ENCODE measurements at regions of chr7 and their contacts with region 1.

Region 1: DNA sequence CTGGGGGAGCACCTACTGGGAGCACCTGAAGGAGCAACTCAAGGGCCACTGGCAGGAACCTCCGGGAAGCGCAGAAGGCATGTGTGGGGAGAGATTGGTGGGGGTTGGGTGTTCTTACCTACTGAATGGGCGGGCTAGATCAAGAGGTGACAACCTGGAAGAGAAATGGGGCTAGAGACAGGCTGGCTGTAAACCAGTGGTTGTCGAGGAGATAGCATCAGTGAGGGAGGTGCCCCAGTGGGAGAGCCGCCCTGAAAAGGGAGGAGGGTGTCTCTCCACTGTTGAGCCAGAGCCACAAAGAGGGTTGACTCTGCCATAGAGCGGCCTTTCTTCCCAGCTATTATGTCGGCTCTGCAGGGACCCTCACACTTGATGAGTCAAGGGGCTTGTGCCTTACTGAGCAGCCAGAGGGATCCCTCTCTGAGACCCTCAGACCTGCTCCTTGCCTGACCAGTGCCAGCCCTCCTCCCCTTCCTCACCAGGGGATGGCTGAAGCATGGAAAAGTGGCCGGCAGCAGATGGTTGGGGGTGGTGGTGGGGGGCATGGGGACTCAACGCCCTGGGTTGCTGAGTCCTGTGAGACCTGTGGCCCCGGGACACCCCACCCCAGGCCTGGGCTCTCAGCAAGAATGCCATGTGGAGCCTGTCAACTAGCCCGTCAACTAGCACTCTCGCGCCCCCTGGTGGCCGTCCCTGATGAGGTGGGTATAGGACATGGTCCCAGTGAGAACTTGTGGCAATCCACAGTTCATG is 36.5 kb upstream of the PURB start:
- DNase-seq: peak; percentile 82 to 91 (median 85)
- ATAC-seq: peak; percentile 98
- H3K4me3 ChIP-seq: 0 out of 2 replicates have a peak overlapping the region, but pooled peaks have one; percentile 2
- H3K27ac ChIP-seq: peak overlapping the region; percentile 51
- H3K4me1 ChIP-seq: peaks cover 7 to 13% of the 10 kb centered on the region in 2 experiments; a peak in 3 of 5 replicates
- H3K27me3 ChIP-seq: no peaks in the 10 kb centered on the region
- CTCF ChIP-seq: peak; percentile 85 to 88 (median 85)
- EP300 ChIP-seq: peak; percentile 14; the same call in 1 of the 2 replicates
- POLR2A ChIP-seq: peak; percentile 74
- RAD21 ChIP-seq: peak; percentile 90 to 91

Region 2: GRCh38 chr7:44534501-44534900 is 387.3 kb before region 1 on chr7:
- CTCF ChIA-PET with region 1: no interaction called
- POLR2A ChIA-PET with region 1: no interaction called
- in situ Hi-C with region 1: no loop called
- intact Hi-C with region 1: no loop called
- DNase-seq: peak; percentile 80 to 89 (median 87)
- ATAC-seq: peak; percentile 93
- H3K4me3 ChIP-seq: no peak overlapping the region
- H3K27ac ChIP-seq: no peak overlapping the region
- H3K4me1 ChIP-seq: peaks cover 0 to 43% of the 10 kb centered on the region in 2 experiments; a peak in 2 of 5 replicates
- H3K27me3 ChIP-seq: no peaks in the 10 kb centered on the region
- CTCF ChIP-seq: peak; percentile 77 to 89 (median 82)
- EP300 ChIP-seq: no peak
- POLR2A ChIP-seq: no peak
- RAD21 ChIP-seq: peak in 1 of 2 experiments; percentile 43; a peak in 2 of 4 replicates

Region 3: DNA sequence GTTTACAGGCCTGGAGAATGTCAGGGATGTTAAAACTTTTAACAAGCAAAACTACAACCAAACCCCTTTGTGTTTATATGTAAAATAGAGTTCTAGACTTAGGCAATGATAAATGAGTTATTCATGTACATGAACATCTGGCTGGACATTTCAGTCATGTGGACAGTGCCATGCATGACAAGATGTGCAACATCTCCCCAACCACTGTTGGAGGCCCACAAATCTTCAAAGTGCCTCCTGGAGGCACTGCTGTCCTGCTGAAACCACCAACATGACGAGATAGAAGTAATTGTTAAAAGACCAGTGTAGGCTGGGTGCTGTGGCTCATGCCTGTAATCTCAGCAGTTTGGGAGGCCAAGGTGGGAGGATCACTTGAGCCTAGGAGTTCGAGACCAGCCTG is 106.9 kb before region 1 on chr7:
- CTCF ChIA-PET with region 1: interaction called, 3 read pairs
- POLR2A ChIA-PET with region 1: no interaction called
- in situ Hi-C with region 1: no loop called
- intact Hi-C with region 1: loop called (anchors 1 kb)
- DNase-seq: peak in 1 of 4 experiments; percentile 49
- ATAC-seq: peak; percentile 75
- H3K4me3 ChIP-seq: no peak overlapping the region
- H3K27ac ChIP-seq: no peak overlapping the region
- H3K4me1 ChIP-seq: peaks cover 0 to 5% of the 10 kb centered on the region in 2 experiments; a peak in 4 of 5 replicates
- H3K27me3 ChIP-seq: no peaks in the 10 kb centered on the region
- CTCF ChIP-seq: peak; percentile 20 to 38 (median 33); a peak in 3 of 6 replicates
- EP300 ChIP-seq: no peak
- POLR2A ChIP-seq: no peak
- RAD21 ChIP-seq: peak in 1 of 2 experiments; percentile 62; a peak in 3 of 4 replicates

Region 4: GRCh38 chr7:44858161-44858560 is 63.6 kb before region 1 on chr7:
- CTCF ChIA-PET with region 1: interaction called, 6 read pairs
- POLR2A ChIA-PET with region 1: no interaction called
- in situ Hi-C with region 1: loop called (anchors 5 kb)
- intact Hi-C with region 1: loop called (anchors 1 kb)
- DNase-seq: no peak
- ATAC-seq: no peak
- H3K4me3 ChIP-seq: no peak overlapping the region
- H3K27ac ChIP-seq: no peak overlapping the region
- H3K4me1 ChIP-seq: peaks cover 0 to 4% of the 10 kb centered on the region in 2 experiments; a peak in 2 of 5 replicates
- H3K27me3 ChIP-seq: no peaks in the 10 kb centered on the region
- CTCF ChIP-seq: no peak; a peak in 1 of 6 replicates
- EP300 ChIP-seq: no peak
- POLR2A ChIP-seq: no peak
- RAD21 ChIP-seq: no peak

Region 5: GRCh38 chr7:45065031-45065995 is 143.5 kb after region 1 on chr7:
- CTCF ChIA-PET with region 1: no interaction called
- POLR2A ChIA-PET with region 1: no interaction called
- in situ Hi-C with region 1: no loop called
- intact Hi-C with region 1: no loop called
- DNase-seq: no peak
- ATAC-seq: no peak; the same call in 2 of the 3 replicates
- H3K4me3 ChIP-seq: no peak overlapping the region
- H3K27ac ChIP-seq: no peak overlapping the region
- H3K4me1 ChIP-seq: peaks cover 0 to 5% of the 10 kb centered on the region in 2 experiments; a peak in 1 of 5 replicates
- H3K27me3 ChIP-seq: no peaks in the 10 kb centered on the region
- CTCF ChIP-seq: no peak
- EP300 ChIP-seq: no peak
- POLR2A ChIP-seq: no peak
- RAD21 ChIP-seq: no peak

Region 6: GRCh38 chr7:45267266-45267665 is 345.5 kb after region 1 on chr7:
- CTCF ChIA-PET with region 1: no interaction called
- POLR2A ChIA-PET with region 1: no interaction called
- in situ Hi-C with region 1: no loop called
- intact Hi-C with region 1: no loop called
- DNase-seq: no peak
- ATAC-seq: no peak
- H3K4me3 ChIP-seq: no peak overlapping the region
- H3K27ac ChIP-seq: no peak overlapping the region
- H3K4me1 ChIP-seq: no peaks in the 10 kb centered on the region
- H3K27me3 ChIP-seq: peaks cover 2 to 29% of the 10 kb centered on the region in 2 experiments; a peak in 4 of 5 replicates
- CTCF ChIP-seq: no peak
- EP300 ChIP-seq: no peak
- POLR2A ChIP-seq: no peak
- RAD21 ChIP-seq: no peak

Region 7: GRCh38 chr7:46229409-46229808 is 1307.6 kb after region 1 on chr7:
- CTCF ChIA-PET with region 1: no interaction called
- POLR2A ChIA-PET with region 1: no interaction called
- in situ Hi-C with region 1: no loop called
- intact Hi-C with region 1: no loop called
- DNase-seq: no peak
- ATAC-seq: no peak
- H3K4me3 ChIP-seq: no peak overlapping the region
- H3K27ac ChIP-seq: no peak overlapping the region
- H3K4me1 ChIP-seq: no peaks in the 10 kb centered on the region
- H3K27me3 ChIP-seq: no peaks in the 10 kb centered on the region
- CTCF ChIP-seq: no peak
- EP300 ChIP-seq: no peak
- POLR2A ChIP-seq: no peak
- RAD21 ChIP-seq: no peak

Measured in K562 (cell line).